K562 (cell line): ENCODE measurements at regions of chr15 and their contacts with region 1.

Region 1: DNA sequence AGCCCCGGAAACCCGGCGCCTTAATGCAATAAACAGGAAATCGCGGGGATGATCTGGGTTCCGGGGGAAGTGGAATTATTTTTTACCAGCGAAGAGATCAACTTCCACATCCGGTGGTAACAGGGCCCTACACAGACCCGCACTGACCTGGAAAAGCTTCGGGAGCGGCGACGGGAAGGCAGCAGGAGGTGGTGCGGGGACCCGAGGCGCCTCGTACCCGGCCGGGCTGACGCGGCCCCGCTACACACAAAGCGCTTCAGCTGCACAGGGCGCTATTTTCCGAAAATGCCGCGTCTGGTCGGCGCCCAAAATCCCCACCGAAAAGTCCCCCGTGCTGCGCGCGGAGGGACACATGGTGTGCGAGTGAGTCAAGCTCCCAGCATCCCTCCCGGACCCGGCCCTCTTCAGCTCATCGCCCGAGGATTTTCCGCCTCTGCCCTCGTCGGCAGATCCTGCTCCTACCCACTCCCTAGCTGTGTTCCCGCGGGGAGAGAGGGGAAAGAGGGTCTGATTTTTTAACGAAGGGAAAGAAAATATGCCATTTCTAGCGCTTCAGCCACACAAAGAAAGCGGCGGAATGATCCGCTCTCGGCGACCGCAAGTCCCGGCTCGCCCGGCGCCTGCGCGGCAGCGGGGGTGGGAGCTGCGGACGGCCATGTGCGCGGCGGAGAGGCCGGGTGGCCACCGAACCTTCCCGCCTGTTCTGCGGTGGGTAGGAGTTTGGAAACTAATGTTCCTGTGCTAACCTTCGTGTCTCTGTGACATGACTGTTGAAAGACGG is at the start of gene GABPB1:
- DNase-seq: peak; percentile 93 to 96 (median 94)
- ATAC-seq: peak; percentile 64
- H3K4me3 ChIP-seq: peak within 1 kb of the TSS; percentile 89
- H3K27ac ChIP-seq: peak within 1 kb of the TSS; percentile 96
- H3K4me1 ChIP-seq: peaks cover 9 to 14% of the 10 kb centered on the region in 2 experiments; a peak in 4 of 5 replicates
- H3K27me3 ChIP-seq: no peaks in the 10 kb centered on the region
- CTCF ChIP-seq: no peak
- EP300 ChIP-seq: no peak
- POLR2A ChIP-seq: peak; percentile 94
- RAD21 ChIP-seq: no peak
- polyA plus RNA-seq, gene GABPB1: 11.8 to 16.8 TPM

Region 2: GRCh38 chr15:50340416-50340815 is 14.6 kb before region 1 on chr15:
- CTCF ChIA-PET with region 1: no interaction called
- POLR2A ChIA-PET with region 1: interaction called, 19 read pairs
- in situ Hi-C with region 1: no loop called
- intact Hi-C with region 1: no loop called
- DNase-seq: no peak
- ATAC-seq: no peak
- H3K4me3 ChIP-seq: no peak overlapping the region
- H3K27ac ChIP-seq: no peak overlapping the region
- H3K4me1 ChIP-seq: peaks cover 0 to 8% of the 10 kb centered on the region in 2 experiments; a peak in 2 of 5 replicates
- H3K27me3 ChIP-seq: no peaks in the 10 kb centered on the region
- CTCF ChIP-seq: no peak
- EP300 ChIP-seq: no peak
- POLR2A ChIP-seq: no peak
- RAD21 ChIP-seq: no peak

Region 3: GRCh38 chr15:50424066-50424890 is 69.2 kb after region 1 on chr15 and contains the start of gene USP8:
- CTCF ChIA-PET with region 1: no interaction called
- POLR2A ChIA-PET with region 1: interaction called, 10 read pairs
- in situ Hi-C with region 1: no loop called
- intact Hi-C with region 1: loop called (anchors 2 kb)
- DNase-seq: peak; percentile 92 to 99 (median 94)
- ATAC-seq: peak; percentile 97
- H3K4me3 ChIP-seq: peak within 1 kb of the TSS; percentile 76
- H3K27ac ChIP-seq: peak within 1 kb of the TSS; percentile 90
- H3K4me1 ChIP-seq: peaks cover 4 to 10% of the 10 kb centered on the region in 2 experiments; a peak in 4 of 5 replicates
- H3K27me3 ChIP-seq: no peaks in the 10 kb centered on the region
- CTCF ChIP-seq: no peak
- EP300 ChIP-seq: peak; percentile 7; the same call in 1 of the 2 replicates
- POLR2A ChIP-seq: peak; percentile 95
- RAD21 ChIP-seq: no peak
- polyA plus RNA-seq, gene USP8: 43.9 to 44.8 TPM

Region 4: DNA sequence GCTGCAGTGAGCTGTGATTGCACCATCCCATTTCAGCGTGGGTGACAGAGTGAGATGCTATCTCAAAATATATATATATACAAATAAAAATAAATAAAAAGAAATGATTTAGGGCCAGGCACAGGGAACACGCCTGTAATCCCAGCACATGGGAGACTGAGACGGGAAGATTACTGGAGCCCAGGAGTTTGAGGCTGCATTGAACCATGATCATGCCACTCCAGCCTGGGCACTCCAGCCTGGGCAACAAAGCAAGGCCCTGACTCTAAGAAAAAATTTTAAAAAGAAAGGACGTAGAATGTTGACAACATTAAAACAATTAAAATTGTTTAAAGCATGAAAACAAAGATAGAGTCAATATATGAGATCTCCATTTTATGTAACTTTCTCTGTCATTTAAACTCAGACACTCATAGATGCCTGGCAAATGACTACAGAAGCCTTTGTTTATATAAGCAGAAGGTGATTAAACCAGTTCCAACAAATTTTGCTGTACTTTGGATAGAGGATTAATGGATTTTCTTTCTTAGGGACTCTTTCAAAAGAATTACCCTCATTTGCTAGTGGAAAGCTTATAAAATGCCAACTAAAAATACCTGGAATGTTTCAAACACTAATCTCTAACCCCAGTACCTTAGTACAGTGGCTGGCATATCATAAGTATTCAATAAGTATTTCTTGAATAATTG is 342.2 kb after region 1 on chr15:
- CTCF ChIA-PET with region 1: no interaction called
- POLR2A ChIA-PET with region 1: no interaction called
- in situ Hi-C with region 1: no loop called
- intact Hi-C with region 1: no loop called
- DNase-seq: no peak
- ATAC-seq: no peak
- H3K4me3 ChIP-seq: no peak overlapping the region
- H3K27ac ChIP-seq: no peak overlapping the region
- H3K4me1 ChIP-seq: no peaks in the 10 kb centered on the region
- H3K27me3 ChIP-seq: no peaks in the 10 kb centered on the region
- CTCF ChIP-seq: no peak
- EP300 ChIP-seq: no peak
- POLR2A ChIP-seq: no peak
- RAD21 ChIP-seq: no peak

Region 5: DNA sequence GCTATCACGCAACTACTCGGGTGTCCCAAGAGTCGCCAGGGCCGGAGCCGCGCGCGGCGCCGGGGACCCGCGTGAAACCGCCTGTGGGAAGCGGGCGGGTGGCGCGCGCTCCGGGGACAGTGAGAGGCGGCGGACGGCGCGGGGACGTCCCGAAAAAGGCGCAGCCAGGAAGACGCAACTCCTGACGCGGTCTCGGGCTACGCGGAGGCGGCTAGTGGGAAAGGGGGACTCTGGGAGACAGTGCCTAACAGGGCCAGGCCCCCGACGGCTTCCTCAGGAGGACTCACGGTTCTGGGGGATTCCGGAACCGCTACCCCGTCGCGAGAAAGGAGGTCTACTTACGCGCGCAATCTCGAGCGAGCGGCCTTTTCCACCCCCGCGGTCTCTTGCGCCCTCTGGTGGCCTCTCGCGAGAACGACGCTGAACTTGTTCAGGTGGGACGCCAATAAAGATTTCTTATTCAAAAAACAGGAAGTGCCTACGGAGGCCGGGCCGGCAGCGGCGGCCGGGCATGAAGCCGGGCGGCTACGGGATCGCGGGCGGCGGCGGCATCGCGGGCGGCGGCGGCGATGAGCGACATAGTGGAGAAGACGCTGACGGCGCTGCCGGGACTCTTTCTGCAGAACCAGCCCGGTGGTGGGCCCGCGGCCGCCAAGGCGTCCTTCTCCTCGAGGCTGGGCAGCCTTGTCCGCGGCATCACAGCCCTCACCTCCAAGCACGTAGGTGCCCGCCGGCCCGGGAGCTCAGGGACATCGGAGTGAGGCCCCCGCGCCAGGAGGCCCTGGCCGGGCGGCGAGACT is 553.4 kb after region 1 on chr15 and contains the start of gene AP4E1:
- CTCF ChIA-PET with region 1: no interaction called
- POLR2A ChIA-PET with region 1: interaction called, 3 read pairs
- in situ Hi-C with region 1: loop called (anchors 10 kb)
- intact Hi-C with region 1: loop called (anchors 10 kb)
- DNase-seq: peak; percentile 76 to 95 (median 79)
- ATAC-seq: peak; percentile 82
- H3K4me3 ChIP-seq: peak within 1 kb of the TSS; percentile 98
- H3K27ac ChIP-seq: peak within 1 kb of the TSS; percentile 92
- H3K4me1 ChIP-seq: peaks cover 0 to 12% of the 10 kb centered on the region in 2 experiments; a peak in 2 of 5 replicates
- H3K27me3 ChIP-seq: no peaks in the 10 kb centered on the region
- CTCF ChIP-seq: peak; percentile 91 to 97 (median 93)
- EP300 ChIP-seq: peak; percentile 67
- POLR2A ChIP-seq: peak; percentile 88
- RAD21 ChIP-seq: peak; percentile 87 to 96
- polyA plus RNA-seq, gene AP4E1: 1.3 to 2.2 TPM